ENCODE measurements at regions of chr12 and their contacts with region 1.

Region 1: DNA sequence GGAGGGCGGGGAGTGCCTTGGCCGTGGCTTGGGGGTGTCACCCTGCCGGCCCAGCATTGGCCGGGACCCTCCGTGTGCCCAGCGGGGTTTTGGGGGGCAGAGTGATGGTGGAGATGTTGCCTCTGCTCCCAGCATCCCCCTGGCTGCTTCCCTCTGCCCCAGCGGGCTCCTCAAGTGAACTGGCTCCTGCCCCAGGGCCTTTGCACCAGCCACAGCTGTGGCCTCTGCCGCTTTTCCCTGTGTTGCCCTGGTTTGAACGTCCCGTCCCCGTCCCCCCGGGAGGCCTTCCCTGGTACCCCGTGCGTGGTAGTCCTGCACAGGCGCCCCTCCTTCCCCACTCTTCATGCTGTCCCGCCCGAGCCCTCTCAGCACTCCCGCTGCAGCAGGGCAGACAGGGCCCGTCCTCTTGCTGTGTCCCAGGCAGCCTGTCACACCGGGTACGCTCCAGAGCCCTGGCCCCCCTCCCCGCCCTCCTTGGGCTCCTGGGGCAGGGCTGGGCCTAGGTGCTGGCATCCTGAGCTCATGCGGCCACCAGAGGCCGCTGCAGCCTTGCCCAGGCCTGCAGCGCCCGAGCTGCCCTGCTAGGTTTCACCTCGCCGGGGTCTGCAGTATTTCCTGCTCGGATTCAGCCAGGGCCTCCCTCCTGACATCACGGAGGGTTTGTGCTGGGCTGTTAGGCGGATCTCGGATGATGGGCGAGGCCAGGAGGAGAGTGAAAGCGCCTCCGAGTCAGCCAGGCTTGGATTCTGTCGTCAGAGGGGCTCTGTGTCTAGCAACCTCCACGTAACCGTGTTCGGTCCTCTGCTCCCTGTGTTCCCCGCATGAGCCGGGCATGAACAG is 9.5 kb downstream of the NOC4L start:
- DNase-seq: peak; percentile 80
- ATAC-seq: peak; percentile 87
- H3K4me3 Mint-ChIP-seq: no peak overlapping the region
- H3K27ac Mint-ChIP-seq: no peak overlapping the region
- H3K4me1 Mint-ChIP-seq: no peaks in the 10 kb centered on the region
- H3K27me3 Mint-ChIP-seq: no peaks in the 10 kb centered on the region

Region 2: DNA sequence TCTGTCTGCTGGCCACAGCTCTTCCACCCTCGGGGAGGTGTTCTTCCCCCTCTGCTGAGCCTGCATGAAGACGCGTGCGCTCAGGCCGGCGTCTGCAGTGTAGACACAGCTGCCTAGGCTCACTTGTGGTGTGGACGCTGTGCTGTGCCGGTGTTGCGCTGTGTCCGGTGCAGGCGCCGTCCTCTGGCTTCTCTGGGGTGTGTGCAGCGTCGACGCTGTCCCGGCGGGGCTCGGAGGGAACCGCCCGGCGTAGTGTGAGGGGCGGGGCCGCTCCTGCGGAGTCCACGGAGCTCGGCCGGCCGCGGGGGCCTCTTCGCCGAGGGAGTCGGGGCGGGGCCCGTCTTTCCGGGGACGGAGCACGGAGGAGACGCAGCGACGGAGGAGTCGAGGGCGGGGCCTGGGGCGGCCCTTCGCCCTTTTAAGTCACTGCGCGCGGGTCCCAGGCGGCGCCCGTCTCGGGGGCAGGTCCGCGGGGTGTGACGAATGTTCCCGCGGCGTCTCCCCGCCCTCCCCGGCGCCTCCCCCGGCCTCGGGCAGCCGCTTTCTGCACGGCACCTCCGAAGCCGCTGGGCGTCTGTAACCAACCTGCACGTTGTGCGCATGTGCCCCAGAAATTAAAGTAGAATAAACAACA is 35.8 kb after region 1 on chr12:
- CTCF ChIA-PET with region 1: interaction called, 13 read pairs
- DNase-seq: peak; percentile 97
- ATAC-seq: peak; percentile 93
- H3K4me3 Mint-ChIP-seq: peak overlapping the region; percentile 83
- H3K27ac Mint-ChIP-seq: peak overlapping the region; percentile 79
- H3K4me1 Mint-ChIP-seq: peaks cover 41% of the 10 kb centered on the region
- H3K27me3 Mint-ChIP-seq: peaks cover 8% of the 10 kb centered on the region

Region 3: DNA sequence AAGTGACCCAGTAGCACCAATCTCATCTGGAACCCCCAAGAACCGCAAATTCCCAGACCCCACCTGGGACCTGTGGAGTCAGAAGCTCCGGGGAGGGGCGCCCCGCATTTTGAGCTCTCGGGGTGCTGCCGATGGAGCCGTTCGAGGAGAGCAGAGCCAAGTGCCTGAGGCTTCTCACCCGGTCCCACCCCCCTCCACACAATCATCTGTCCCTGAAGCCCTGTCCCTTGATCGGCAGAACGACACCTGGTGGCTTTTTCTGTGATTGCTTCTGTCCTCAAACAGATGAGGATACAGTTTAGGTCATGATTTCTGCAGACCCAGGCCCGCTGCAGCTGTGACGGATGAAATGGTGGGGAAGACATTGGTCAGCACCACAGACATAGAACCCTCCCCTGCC is 65.2 kb after region 1 on chr12:
- CTCF ChIA-PET with region 1: interaction called, 29 read pairs
- DNase-seq: peak; percentile 46
- ATAC-seq: no peak
- H3K4me3 Mint-ChIP-seq: no peak overlapping the region
- H3K27ac Mint-ChIP-seq: no peak overlapping the region
- H3K4me1 Mint-ChIP-seq: peaks cover 4% of the 10 kb centered on the region
- H3K27me3 Mint-ChIP-seq: peaks cover 6% of the 10 kb centered on the region

Region 4: DNA sequence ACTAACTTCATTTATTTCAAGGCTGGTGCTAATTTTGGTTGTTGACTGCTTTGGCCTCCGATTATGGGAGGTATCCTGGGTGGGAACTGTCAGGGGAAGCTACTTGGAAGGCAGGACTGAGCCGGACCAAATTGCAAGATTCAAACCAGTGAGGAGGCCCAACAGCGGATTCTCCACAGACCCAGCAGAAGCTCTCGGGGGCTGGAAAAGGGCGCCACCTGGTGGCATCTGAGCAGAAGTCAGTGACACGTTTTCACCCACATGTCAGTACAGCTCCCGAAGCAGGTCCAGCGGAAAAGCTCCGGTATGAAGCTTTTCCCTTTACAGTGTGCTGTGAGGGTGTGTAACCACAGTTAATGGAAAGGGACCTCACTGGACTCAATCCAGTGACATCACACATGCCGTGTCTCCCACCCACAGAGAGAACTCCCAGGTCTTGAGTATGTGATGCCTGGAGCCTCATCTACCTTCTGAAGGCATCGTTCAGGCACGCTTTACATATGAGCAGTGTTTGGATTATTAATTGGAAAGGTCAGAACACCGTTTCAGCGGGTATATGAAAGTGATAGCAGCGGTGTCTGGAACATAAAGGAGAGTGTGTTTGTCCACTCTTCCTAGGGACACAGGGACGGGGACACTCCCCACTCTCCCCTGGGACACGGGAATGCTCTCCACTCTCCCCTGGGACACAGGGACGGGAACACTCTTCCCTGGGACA is 461.3 kb after region 1 on chr12:
- CTCF ChIA-PET with region 1: interaction called, 10 read pairs
- DNase-seq: peak; percentile 85
- ATAC-seq: peak; percentile 91
- H3K4me3 Mint-ChIP-seq: no peak overlapping the region
- H3K27ac Mint-ChIP-seq: no peak overlapping the region
- H3K4me1 Mint-ChIP-seq: peaks cover 1% of the 10 kb centered on the region
- H3K27me3 Mint-ChIP-seq: peaks cover 42% of the 10 kb centered on the region